Activated CD4-positive, alpha-beta T cell treated with anti-CD3 and anti-CD28 coated beads, Interleukin-2, amount 10 ng/mL, durations not matched to agents 7 days and 5 days (primary cell): ENCODE measurements at regions of chr11 and their contacts with region 1.

Region 1: GRCh38 chr11:96389720-96390487 is at the starts of genes CCDC82 and JRKL:
- DNase-seq: peak; percentile 98
- H3K4me3 Mint-ChIP-seq: peak within 1 kb of the TSS; percentile 89
- H3K27ac Mint-ChIP-seq: peak within 1 kb of the TSS; percentile 95
- H3K4me1 Mint-ChIP-seq: peaks cover 61% of the 10 kb centered on the region
- H3K27me3 Mint-ChIP-seq: no peaks in the 10 kb centered on the region
- total RNA-seq, gene CCDC82: 34.0 to 38.0 TPM
- total RNA-seq, gene JRKL: 10.3 to 10.9 TPM

Region 2: DNA sequence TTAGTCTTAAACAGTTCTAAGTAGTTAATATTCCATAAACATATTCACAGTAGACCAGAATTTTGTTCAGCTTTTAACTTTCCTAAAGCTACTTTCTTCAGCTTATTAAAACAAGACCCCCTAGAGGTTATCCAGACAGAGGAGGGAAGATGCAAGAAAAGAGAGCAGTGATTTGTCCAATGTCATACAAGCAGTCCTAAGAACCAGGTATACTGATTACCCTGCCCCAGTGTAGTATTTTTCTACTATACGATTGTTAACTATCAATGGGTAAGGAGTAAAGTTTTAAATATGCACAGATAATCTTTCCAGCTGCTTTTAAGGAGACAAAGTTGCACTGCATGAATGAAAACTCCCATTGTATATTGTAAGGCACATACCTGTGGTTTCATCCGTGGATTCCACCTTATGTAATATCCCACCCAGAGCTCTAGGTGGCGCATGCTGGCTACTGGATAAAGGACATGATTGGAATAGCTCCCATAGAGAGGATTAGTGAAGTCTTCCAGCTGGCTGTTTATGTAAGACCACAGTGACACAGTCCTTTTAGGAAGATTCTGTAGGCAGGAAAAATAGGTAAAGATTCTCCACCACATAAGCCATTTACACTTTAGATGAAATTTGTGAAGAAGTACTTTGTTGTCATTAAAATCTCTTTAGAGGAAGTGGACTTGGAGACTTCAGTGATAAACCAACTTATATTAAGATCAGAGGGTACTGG is 554.0 kb before region 1 on chr11:
- CTCF ChIA-PET with region 1: interaction called, 13 read pairs
- POLR2A ChIA-PET with region 1: no interaction called
- DNase-seq: peak; percentile 66
- H3K4me3 Mint-ChIP-seq: no peak overlapping the region
- H3K27ac Mint-ChIP-seq: no peak overlapping the region
- H3K4me1 Mint-ChIP-seq: no peaks in the 10 kb centered on the region
- H3K27me3 Mint-ChIP-seq: no peaks in the 10 kb centered on the region

Region 3: DNA sequence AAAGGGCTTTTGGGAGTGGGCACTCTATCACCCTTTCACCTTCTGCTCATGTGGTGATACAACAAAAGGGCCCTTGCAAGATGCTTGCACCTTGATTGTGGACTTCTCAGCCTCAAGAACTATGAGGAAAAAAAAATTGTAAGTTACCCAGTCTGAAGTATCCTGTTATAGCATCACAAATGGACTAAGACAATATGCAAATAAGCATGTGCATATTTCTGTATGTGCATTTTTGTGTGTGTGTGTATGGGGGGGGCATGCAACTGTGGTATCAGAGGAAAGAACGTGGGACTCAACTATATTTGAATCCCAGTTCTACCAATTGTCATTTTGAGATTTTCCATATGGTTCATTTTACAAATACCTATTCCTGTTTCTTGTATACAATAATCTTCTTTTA is 10.8 kb after region 1 on chr11:
- CTCF ChIA-PET with region 1: no interaction called
- POLR2A ChIA-PET with region 1: no interaction called
- DNase-seq: no peak
- H3K4me3 Mint-ChIP-seq: no peak overlapping the region
- H3K27ac Mint-ChIP-seq: no peak overlapping the region
- H3K4me1 Mint-ChIP-seq: no peaks in the 10 kb centered on the region
- H3K27me3 Mint-ChIP-seq: peaks cover 28% of the 10 kb centered on the region

Region 4: GRCh38 chr11:96459751-96460150 is 69.8 kb after region 1 on chr11:
- CTCF ChIA-PET with region 1: no interaction called
- POLR2A ChIA-PET with region 1: no interaction called
- DNase-seq: no peak
- H3K4me3 Mint-ChIP-seq: no peak overlapping the region
- H3K27ac Mint-ChIP-seq: no peak overlapping the region
- H3K4me1 Mint-ChIP-seq: peaks cover 8% of the 10 kb centered on the region
- H3K27me3 Mint-ChIP-seq: peaks cover 19% of the 10 kb centered on the region